Gastrocnemius medialis (tissue), 4 donors: ENCODE measurements at regions of chr2 and their contacts with region 1.

Region 1: GRCh38 chr2:102020596-102021181 is 28.9 kb downstream of the IL1R2 start:
- DNase-seq: peak; percentile 77 to 87
- ATAC-seq: peak; percentile 82 to 97
- H3K4me3 ChIP-seq: no peak overlapping the region
- H3K27ac ChIP-seq: no peak overlapping the region
- H3K4me1 ChIP-seq: peaks cover 3 to 19% of the 10 kb centered on the region in 2 donors
- H3K27me3 ChIP-seq: no peaks in the 10 kb centered on the region
- CTCF ChIP-seq: peak; percentile 97 to 100 (median 98)
- POLR2A ChIP-seq: no peak

Region 2: DNA sequence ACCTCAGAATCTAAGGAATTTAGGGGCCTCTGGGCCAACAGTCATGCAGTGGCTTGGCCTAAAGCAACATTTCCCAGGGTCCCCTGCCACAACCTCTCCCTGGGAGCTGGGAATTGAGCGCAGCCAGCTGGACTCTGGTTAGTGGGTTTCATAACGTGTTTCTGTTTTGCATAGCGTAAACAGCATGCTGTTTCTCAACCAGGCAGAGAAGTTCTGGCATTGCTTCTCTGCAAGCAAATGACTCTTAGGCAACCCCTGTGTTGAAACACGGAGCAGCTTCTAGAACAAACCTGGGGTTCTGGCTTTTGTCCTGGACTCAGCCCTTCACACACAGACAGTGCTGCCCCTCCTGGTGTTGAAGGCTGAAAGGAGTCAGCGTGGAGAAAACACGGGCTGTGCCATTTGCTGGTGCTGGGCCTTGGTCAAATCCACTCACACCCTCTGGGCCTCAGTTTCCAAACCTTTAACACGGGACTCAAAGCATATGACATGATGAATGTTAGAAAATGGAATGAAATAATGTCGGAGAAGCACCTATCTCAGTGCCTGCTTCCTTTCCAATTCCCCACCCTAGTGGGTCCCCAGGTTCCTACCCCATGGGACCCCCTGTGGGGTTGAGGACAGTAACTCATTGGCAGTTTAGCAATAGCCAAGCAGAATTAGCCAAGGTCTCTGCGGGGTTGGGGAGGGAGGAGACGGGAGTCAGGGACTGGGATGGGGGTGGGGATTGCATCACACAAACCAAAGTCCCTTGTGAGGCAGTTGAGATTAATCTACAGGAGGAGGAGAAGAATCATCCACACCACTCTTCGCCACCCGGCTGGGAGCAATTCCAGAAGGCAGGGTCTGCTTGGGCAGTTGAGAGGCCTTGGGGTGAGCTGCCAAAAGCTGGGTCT is 59.1 kb before region 1 on chr2:
- in situ Hi-C with region 1: no loop called
- intact Hi-C with region 1: loop called (anchors 5 kb)
- DNase-seq: peak; percentile 75 to 91
- ATAC-seq: peak; percentile 89 to 94
- H3K4me3 ChIP-seq: no peak overlapping the region
- H3K27ac ChIP-seq: peak overlapping the region; percentile 70 to 79 (median 76)
- H3K4me1 ChIP-seq: peaks cover 4 to 10% of the 10 kb centered on the region in 2 donors
- H3K27me3 ChIP-seq: no peaks in the 10 kb centered on the region
- CTCF ChIP-seq: peak in 2 of 5 experiments; percentile 7 to 8
- POLR2A ChIP-seq: peak in 1 of 2 donors; percentile 13

Region 3: DNA sequence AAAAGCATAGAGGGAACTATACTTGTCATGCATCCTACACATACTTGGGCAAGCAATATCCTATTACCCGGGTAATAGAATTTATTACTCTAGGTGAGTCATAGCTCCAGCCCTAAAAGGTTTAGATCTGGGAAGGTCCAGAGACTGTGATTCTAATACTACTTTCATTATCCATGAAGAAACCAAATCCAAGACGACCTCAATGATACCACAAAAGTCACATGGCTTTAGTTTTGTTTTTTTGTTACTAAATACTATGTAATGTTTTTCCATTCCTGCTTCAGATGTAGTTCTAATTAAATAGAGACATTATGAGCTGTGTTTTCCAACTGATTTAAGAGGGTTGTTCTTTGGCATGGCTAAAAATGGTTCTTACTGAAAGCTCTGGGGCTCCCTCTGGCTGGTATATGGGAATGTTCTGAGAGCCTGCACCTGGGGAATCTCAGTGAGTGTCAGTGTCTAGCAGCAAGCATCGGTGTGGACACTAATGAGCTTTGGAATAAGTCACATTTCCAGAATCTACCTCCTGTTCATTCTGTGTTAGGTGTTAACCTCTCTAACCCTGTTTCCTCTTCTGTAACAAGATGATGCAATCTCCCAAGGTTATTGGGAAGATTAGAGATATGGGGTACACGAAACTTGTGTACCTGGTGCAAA is 145.6 kb after region 1 on chr2:
- in situ Hi-C with region 1: loop called in 3 of 4 experiments (anchors 5 kb)
- intact Hi-C with region 1: loop called (anchors 1 kb)
- DNase-seq: peak in 1 of 2 donors; percentile 49
- ATAC-seq: peak; percentile 94 to 95
- H3K4me3 ChIP-seq: no peak overlapping the region
- H3K27ac ChIP-seq: peak overlapping the region; percentile 4 to 47 (median 22)
- H3K4me1 ChIP-seq: peaks cover 9 to 15% of the 10 kb centered on the region in 2 donors
- H3K27me3 ChIP-seq: no peaks in the 10 kb centered on the region
- CTCF ChIP-seq: peak; percentile 67 to 73 (median 72)
- POLR2A ChIP-seq: no peak

Region 4: DNA sequence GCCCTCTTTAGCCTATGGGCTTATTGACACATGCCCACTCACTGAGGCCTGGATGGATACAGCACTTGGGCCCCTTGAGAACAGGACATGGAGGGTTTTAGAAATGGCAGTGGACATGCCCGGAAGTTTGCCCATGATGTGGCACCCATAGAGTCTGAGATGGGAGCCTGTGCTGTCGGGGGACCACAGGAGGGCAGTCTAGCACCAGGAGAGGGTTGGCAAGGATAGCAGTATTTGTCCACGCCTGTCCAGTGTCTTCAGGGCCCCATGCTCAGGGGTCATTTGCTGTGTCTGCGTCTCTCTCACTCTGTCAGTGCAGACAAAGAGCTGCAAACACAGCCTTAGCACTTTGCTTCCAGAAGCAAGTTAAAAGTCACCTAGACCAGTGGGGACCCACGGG is 214.8 kb after region 1 on chr2:
- in situ Hi-C with region 1: loop called (anchors 5 kb)
- intact Hi-C with region 1: loop called (anchors 1 kb)
- DNase-seq: no peak
- ATAC-seq: peak in 1 of 2 donors; percentile 29
- H3K4me3 ChIP-seq: no peak overlapping the region
- H3K27ac ChIP-seq: no peak overlapping the region
- H3K4me1 ChIP-seq: peaks cover 0 to 12% of the 10 kb centered on the region in 2 donors
- H3K27me3 ChIP-seq: no peaks in the 10 kb centered on the region
- CTCF ChIP-seq: peak in 1 of 5 experiments; percentile 29
- POLR2A ChIP-seq: no peak

Region 5: DNA sequence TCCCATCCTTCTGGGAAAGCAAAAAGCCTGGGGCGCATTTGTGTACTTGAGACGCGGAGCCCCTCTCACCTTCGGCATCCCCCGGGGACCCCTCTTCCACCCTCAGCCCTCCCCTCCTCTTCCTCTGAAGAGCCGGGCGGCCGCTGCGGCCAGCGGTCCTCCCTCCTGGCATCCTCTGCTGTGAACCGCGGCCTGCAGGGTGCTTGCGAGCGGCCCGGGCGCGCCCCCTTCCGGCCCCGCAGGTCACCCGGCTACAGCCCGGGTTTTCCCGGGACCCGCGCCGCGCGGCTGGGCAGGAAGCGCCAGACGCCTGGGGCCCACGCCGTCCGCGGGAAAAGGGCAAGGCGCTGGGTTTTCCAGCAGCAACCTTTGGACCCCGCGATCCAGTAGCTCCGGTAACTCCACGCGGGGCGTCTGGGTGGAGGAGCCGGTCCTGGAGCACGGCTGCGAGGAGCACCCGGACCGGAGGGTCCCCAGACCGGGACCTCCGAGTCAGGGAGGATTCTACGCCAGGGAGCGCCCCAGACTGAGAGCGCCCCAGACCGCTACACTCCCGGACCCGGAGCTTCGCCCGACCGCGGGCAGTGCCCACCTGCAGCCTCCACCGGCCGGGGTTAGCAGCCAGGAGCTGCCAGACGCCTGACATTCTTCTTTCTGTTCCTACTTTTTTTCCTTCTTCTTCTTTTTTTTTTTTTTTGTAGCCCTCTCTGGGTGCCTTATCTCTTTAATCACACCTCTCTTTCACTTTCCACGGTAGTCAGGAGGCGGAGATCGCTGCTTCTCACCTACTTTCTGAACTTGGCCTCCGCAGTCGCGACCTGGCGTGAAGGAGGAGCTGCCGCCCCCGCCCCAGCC is 335.1 kb after region 1 on chr2 and contains the start of gene IL18R1:
- in situ Hi-C with region 1: loop called in 1 of 4 experiments (anchors 5 kb)
- intact Hi-C with region 1: loop called (anchors 5 kb)
- DNase-seq: peak; percentile 54 to 56
- ATAC-seq: peak; percentile 92 to 96
- H3K4me3 ChIP-seq: peak within 1 kb of the TSS; percentile 63 to 80 (median 68)
- H3K27ac ChIP-seq: peak within 1 kb of the TSS; percentile 14 to 61 (median 40)
- H3K4me1 ChIP-seq: peaks cover 0 to 6% of the 10 kb centered on the region in 2 donors
- H3K27me3 ChIP-seq: no peaks in the 10 kb centered on the region
- CTCF ChIP-seq: peak; percentile 62 to 91 (median 73)
- POLR2A ChIP-seq: no peak
- total RNA-seq, gene IL18R1: 0.36 to 2.8 (median 1.1) TPM